Adrenal gland (tissue), 19 donors: ENCODE measurements at regions of chrX and their contacts with region 1.

Region 1: GRCh38 chrX:50099331-50099730 is 101.5 kb downstream of the AKAP4 start:
- DNase-seq: no peak
- H3K4me3 ChIP-seq: no peak overlapping the region
- H3K27ac ChIP-seq: no peak overlapping the region
- H3K4me1 ChIP-seq: no peaks in the 10 kb centered on the region
- H3K27me3 ChIP-seq: no peaks in the 10 kb centered on the region
- CTCF ChIP-seq: no peak
- POLR2A ChIP-seq: no peak

Region 2: DNA sequence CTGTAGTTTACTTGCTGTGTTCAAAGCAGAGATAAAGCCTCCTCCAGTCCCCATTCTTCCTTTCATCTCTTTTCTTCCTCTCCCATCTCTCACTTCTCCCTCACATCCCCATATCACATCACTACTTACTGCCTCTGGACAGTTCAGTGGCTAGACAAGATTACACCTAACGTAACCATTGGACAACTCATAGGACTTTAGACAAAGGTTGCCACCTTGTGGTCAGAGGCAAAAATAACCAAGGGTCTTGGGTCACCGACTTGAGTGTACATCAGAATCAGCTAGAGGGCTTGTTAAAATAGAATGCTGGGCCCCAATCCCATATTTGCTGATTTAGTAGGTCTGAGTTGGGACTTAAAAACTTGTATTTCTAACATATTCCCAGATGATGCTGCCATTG is 480.6 kb after region 1 on chrX:
- intact Hi-C with region 1: loop called in 1 of 2 experiments (anchors 10 kb)
- DNase-seq: peak; percentile 29 to 79 (median 37)
- H3K4me3 ChIP-seq: no peak overlapping the region
- H3K27ac ChIP-seq: no peak overlapping the region
- H3K4me1 ChIP-seq: no peaks in the 10 kb centered on the region
- H3K27me3 ChIP-seq: peaks cover 3% of the 10 kb centered on the region
- CTCF ChIP-seq: peak; percentile 24 to 59 (median 52)
- POLR2A ChIP-seq: no peak